ENCODE measurements at regions of chr12 and their contacts with region 1.

Region 1: DNA sequence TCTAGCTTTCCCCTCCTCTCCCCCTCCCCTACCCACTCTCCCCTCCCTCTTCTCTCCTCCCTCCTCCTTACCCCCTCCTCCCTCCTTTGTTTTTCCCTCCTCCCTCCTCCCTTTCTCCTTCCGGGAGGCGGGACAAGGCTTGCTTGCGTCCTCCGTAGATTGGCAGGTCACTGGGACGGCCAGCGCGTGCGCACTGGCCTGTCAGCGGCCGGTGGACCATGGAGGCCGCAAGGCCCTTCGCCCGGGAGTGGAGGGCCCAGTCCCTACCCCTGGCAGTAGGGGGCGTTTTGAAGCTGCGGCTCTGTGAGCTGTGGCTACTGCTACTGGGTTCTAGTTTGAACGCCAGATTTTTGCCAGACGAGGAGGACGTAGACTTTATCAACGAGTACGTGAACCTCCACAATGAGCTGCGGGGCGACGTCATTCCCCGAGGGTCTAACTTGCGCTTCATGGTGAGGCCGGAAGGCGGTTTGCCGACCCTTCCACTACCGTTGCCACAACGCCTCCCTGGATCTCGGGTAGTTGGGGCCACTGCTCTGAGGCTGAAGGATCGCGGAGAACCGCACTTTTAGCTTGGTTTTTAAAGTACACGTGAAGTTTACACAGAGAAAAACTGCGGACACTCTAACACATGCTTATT is at the start of gene GLIPR1L2:
- DNase-seq: peak; percentile 95
- ATAC-seq: peak; percentile 97
- H3K4me3 Mint-ChIP-seq: peak within 1 kb of the TSS; percentile 93
- H3K27ac Mint-ChIP-seq: peak within 1 kb of the TSS; percentile 97
- H3K4me1 Mint-ChIP-seq: peaks cover 49% of the 10 kb centered on the region
- H3K27me3 Mint-ChIP-seq: no peaks in the 10 kb centered on the region
- total RNA-seq, gene GLIPR1L2: 0.39 to 0.50 TPM

Region 2: GRCh38 chr12:74537707-74538385 is 853.2 kb before region 1 on chr12 and contains the start of gene ATXN7L3B:
- CTCF ChIA-PET with region 1: no interaction called
- POLR2A ChIA-PET with region 1: no interaction called
- intact Hi-C with region 1: loop called in 1 of 2 experiments (anchors 5 kb)
- DNase-seq: peak; percentile 96
- ATAC-seq: peak; percentile 96
- H3K4me3 Mint-ChIP-seq: peak within 1 kb of the TSS; percentile 97
- H3K27ac Mint-ChIP-seq: peak within 1 kb of the TSS; percentile 97
- H3K4me1 Mint-ChIP-seq: peaks cover 50% of the 10 kb centered on the region
- H3K27me3 Mint-ChIP-seq: no peaks in the 10 kb centered on the region
- total RNA-seq, gene ATXN7L3B: 16.4 to 19.7 TPM

Region 3: DNA sequence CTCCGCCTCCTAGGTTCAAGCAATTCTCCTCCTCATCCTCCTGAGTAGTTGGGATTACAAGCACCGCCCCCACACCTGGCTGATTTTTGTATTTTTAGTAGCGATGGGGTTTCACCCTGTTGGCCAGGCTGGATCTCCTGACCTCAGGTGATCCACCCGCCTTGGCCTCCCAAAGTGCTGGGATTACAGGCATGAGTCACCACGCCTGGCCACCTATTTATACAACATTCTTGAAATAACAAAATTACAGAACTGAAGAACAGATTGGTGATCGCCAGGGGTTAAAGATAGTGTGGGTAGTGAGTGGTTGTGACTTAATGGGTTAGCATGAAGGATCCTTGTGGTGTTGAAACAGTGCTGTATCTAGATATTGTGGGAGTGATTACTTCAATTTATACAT is 49.2 kb before region 1 on chr12:
- CTCF ChIA-PET with region 1: interaction called, 7 read pairs
- POLR2A ChIA-PET with region 1: no interaction called
- intact Hi-C with region 1: loop called (anchors 1 kb)
- DNase-seq: no peak
- ATAC-seq: no peak
- H3K4me3 Mint-ChIP-seq: no peak overlapping the region
- H3K27ac Mint-ChIP-seq: no peak overlapping the region
- H3K4me1 Mint-ChIP-seq: peaks cover 17% of the 10 kb centered on the region
- H3K27me3 Mint-ChIP-seq: peaks cover 14% of the 10 kb centered on the region

Region 4: GRCh38 chr12:75480469-75480949 is 89.5 kb after region 1 on chr12 and contains the start of gene GLIPR1:
- CTCF ChIA-PET with region 1: interaction called, 21 read pairs
- POLR2A ChIA-PET with region 1: interaction called, 4 read pairs
- intact Hi-C with region 1: loop called (anchors 1 kb)
- DNase-seq: peak; percentile 86
- ATAC-seq: peak; percentile 83
- H3K4me3 Mint-ChIP-seq: peak within 1 kb of the TSS; percentile 93
- H3K27ac Mint-ChIP-seq: peak within 1 kb of the TSS; percentile 89
- H3K4me1 Mint-ChIP-seq: peaks cover 90% of the 10 kb centered on the region
- H3K27me3 Mint-ChIP-seq: no peaks in the 10 kb centered on the region
- total RNA-seq, gene GLIPR1: 8.7 to 9.3 TPM

Region 5: GRCh38 chr12:75511116-75512048 is 120.4 kb after region 1 on chr12 and contains the start of gene KRR1:
- CTCF ChIA-PET with region 1: interaction called, 4 read pairs
- POLR2A ChIA-PET with region 1: interaction called, 3 read pairs
- intact Hi-C with region 1: loop called (anchors 1 to 2 kb)
- DNase-seq: peak; percentile 94
- ATAC-seq: peak; percentile 96
- H3K4me3 Mint-ChIP-seq: peak within 1 kb of the TSS; percentile 100
- H3K27ac Mint-ChIP-seq: peak within 1 kb of the TSS; percentile 99
- H3K4me1 Mint-ChIP-seq: peaks cover 33% of the 10 kb centered on the region
- H3K27me3 Mint-ChIP-seq: no peaks in the 10 kb centered on the region
- total RNA-seq, gene KRR1: 122 to 147 TPM

Region 6: DNA sequence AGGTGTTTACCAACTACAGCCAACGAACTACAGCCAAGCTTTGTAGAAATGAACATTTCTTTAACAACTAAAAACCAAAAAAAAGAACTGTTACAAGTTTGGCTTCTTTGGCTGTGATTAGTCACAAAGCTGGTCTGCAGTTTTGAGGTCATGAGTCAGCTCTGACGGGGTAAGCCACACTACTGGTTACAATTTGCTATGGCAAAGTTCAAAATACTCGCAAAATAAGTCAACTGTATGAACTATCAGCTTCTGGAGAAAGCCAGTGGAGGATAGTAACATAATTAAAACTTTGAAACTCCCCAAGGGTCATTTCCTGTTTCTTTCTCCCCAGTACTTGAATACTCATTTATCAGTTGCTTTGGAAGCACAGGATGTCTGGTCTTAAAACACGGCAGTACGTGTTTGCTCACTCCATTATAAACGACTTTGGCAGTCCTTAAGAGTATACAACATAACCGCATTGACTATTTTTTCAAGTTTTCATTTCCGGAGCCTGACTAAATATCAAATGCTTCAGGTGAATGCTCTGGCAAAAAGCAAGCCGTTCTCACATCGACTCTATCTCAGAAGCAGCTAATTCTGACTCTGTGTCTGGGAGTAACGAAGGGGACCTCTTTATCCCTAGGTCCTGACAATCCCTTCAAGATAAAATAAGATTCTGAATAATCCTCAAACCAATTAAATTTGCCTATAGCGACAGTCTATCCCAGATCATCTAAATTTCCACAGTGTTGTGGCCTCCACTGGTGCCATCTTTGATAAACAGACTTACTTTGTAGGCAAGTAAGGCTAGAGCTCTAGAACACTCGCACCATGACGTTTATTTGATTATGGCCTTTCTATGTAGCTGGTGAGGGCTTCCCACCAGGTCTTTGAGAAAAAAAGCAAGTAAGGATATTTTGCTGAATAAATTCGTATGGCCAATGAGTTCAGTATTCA is 630.0 kb after region 1 on chr12:
- CTCF ChIA-PET with region 1: no interaction called
- POLR2A ChIA-PET with region 1: no interaction called
- intact Hi-C with region 1: loop called in 1 of 2 experiments (anchors 5 kb)
- DNase-seq: peak; percentile 88
- ATAC-seq: peak; percentile 79
- H3K4me3 Mint-ChIP-seq: peak overlapping the region; percentile 54
- H3K27ac Mint-ChIP-seq: peak overlapping the region; percentile 99
- H3K4me1 Mint-ChIP-seq: peaks cover 56% of the 10 kb centered on the region
- H3K27me3 Mint-ChIP-seq: peaks cover 1% of the 10 kb centered on the region

Region 7: GRCh38 chr12:76559400-76560085 is 1168.5 kb after region 1 on chr12 and contains the start of gene OSBPL8:
- CTCF ChIA-PET with region 1: no interaction called
- POLR2A ChIA-PET with region 1: no interaction called
- intact Hi-C with region 1: loop called in 1 of 2 experiments (anchors 5 kb)
- DNase-seq: peak; percentile 98
- ATAC-seq: peak; percentile 70
- H3K4me3 Mint-ChIP-seq: peak within 1 kb of the TSS; percentile 86
- H3K27ac Mint-ChIP-seq: peak within 1 kb of the TSS; percentile 98
- H3K4me1 Mint-ChIP-seq: peaks cover 24% of the 10 kb centered on the region
- H3K27me3 Mint-ChIP-seq: no peaks in the 10 kb centered on the region
- total RNA-seq, gene OSBPL8: 70.2 to 78.5 TPM